Mucosa of descending colon (tissue), 3 donors: ENCODE measurements at regions of chr1 and their contacts with region 1.

Region 1: GRCh38 chr1:68120136-68120791 is 69.8 kb upstream of the DIRAS3 start:
- DNase-seq: peak in 1 of 3 donors; percentile 87
- ATAC-seq: peak; percentile 83
- H3K4me3 ChIP-seq: no peak overlapping the region
- H3K4me1 ChIP-seq: no peaks in the 10 kb centered on the region
- CTCF ChIP-seq: peak; percentile 29

Region 2: GRCh38 chr1:67535474-67535873 is 584.8 kb before region 1 on chr1:
- intact Hi-C with region 1: loop called in 1 of 2 experiments (anchors 10 kb)
- DNase-seq: peak; percentile 81 to 89 (median 88)
- ATAC-seq: peak; percentile 92
- H3K4me3 ChIP-seq: no peak overlapping the region
- H3K4me1 ChIP-seq: peaks cover 13% of the 10 kb centered on the region
- CTCF ChIP-seq: peak; percentile 91

Region 3: GRCh38 chr1:67853704-67854103 is 266.6 kb before region 1 on chr1:
- intact Hi-C with region 1: loop called in 1 of 2 experiments (anchors 10 kb)
- DNase-seq: peak; percentile 50 to 80 (median 73)
- ATAC-seq: peak; percentile 69
- H3K4me3 ChIP-seq: no peak overlapping the region
- H3K4me1 ChIP-seq: peaks cover 3% of the 10 kb centered on the region
- CTCF ChIP-seq: peak; percentile 52

Region 4: DNA sequence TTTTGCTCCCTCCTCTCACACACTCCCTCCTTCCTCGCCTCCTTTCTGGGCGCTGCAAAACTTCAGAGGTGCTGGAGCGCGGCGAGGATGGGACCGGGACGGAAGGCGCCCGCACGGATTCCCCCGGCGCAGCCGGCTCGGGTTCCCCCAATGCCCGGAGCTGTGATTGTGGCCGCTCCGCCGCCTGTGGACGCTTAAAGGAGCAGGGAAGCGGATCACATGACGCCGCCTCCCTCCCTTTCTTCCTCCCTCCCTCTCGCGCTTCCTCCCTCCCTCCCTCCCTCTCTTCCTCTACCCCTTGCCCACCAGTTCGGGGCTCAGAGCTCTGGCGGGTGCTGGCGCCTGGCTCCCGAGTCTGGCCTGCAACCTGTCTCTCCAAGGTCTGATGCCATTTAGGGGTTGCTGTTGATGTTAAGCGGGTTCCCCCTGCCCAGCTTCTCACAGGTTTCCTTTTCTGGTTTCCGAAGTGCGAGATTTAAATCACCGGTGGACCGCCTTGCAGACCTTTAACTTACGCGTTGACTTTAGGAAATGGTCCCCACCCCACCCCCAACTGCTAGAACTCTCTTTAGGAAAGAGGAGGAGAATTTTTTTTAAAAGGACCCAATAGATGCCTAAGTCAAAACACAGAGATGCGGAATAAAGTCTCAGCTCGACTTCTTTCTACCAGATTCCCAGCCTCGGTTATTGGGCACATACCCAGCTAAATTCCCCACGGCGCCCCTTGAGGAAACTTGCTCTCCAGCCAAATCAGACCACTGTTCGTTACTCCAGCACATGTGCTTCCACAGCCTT is 112.3 kb after region 1 on chr1 and contains the start of gene WLS:
- intact Hi-C with region 1: loop called in 1 of 2 experiments (anchors 10 kb)
- DNase-seq: peak; percentile 84
- ATAC-seq: peak; percentile 88
- H3K4me3 ChIP-seq: peak within 1 kb of the TSS; percentile 33
- H3K4me1 ChIP-seq: no peaks in the 10 kb centered on the region
- CTCF ChIP-seq: no peak
- total RNA-seq, gene WLS: 100 to 182 (median 118) TPM

Region 5: DNA sequence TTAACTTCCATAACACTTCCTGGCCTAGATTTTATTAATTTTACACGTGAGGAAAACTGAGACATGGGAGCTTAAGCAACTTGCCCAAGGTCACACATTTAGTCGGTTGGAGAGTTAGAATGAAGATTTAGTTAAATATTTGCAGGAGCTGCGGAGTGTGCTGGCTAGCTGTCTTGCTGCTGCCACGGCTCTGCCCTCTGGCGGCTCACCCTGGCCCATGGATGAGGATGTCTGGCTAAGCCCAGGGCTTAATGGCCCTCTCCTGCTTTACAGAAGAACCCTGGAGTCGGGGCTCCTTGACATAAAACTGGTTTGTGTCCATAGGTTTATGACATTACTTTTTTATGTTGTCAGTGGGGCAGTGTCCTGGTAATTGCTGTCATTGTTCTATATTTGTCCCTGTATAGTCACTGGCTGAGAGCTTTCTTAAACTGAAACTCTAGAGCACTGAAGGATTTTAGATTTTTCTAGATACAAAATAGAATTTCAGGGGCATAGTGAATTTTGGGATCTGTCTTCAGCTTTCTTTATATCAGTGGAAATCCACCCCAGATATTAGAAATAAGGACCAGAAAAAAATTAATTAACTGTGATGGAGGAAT is 200.9 kb after region 1 on chr1:
- intact Hi-C with region 1: loop called in 1 of 2 experiments (anchors 5 kb)
- DNase-seq: peak; percentile 66 to 87 (median 84)
- ATAC-seq: peak; percentile 95
- H3K4me3 ChIP-seq: no peak overlapping the region
- H3K4me1 ChIP-seq: peaks cover 4% of the 10 kb centered on the region
- CTCF ChIP-seq: peak; percentile 52

Region 6: DNA sequence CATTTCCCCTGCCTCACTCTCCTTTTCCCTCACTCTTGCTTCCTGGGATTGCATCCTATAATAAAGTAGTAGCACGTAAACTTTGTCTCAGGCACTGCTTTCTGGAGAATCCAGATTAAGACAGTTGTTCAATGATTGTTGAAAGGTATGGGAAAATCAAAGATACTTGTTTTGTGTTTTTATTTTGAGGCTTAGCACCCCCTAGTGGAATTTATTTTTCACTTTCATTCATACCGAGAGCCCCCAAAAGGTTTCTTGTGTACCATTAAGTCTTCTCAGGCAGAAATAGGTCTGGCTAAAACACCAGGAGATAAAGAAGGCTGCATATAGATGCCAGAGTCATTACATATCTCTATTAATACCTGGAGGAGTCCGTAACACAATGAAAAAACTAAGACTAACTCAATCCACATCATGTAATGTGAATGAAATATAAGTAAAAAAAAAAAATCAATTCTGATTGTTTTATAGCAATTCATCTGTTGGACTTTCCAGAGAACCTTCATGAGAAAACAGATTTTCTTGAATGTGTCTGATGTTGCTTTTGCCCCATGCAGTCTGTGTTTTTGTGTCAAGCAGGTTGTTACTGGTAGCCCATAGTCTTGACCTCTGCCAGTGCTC is 226.0 kb after region 1 on chr1:
- intact Hi-C with region 1: loop called (anchors 2 to 5 kb)
- DNase-seq: no peak
- ATAC-seq: no peak
- H3K4me3 ChIP-seq: no peak overlapping the region
- H3K4me1 ChIP-seq: no peaks in the 10 kb centered on the region
- CTCF ChIP-seq: no peak

Region 7: GRCh38 chr1:68442822-68443556 is 322.7 kb after region 1 on chr1:
- intact Hi-C with region 1: loop called in 1 of 2 experiments (anchors 5 kb)
- DNase-seq: peak in 1 of 3 donors; percentile 61
- ATAC-seq: peak; percentile 49
- H3K4me3 ChIP-seq: no peak overlapping the region
- H3K4me1 ChIP-seq: no peaks in the 10 kb centered on the region
- CTCF ChIP-seq: no peak